GM13976 (cell line): ENCODE measurements at regions of chr4 and their contacts with region 1.

Region 1: DNA sequence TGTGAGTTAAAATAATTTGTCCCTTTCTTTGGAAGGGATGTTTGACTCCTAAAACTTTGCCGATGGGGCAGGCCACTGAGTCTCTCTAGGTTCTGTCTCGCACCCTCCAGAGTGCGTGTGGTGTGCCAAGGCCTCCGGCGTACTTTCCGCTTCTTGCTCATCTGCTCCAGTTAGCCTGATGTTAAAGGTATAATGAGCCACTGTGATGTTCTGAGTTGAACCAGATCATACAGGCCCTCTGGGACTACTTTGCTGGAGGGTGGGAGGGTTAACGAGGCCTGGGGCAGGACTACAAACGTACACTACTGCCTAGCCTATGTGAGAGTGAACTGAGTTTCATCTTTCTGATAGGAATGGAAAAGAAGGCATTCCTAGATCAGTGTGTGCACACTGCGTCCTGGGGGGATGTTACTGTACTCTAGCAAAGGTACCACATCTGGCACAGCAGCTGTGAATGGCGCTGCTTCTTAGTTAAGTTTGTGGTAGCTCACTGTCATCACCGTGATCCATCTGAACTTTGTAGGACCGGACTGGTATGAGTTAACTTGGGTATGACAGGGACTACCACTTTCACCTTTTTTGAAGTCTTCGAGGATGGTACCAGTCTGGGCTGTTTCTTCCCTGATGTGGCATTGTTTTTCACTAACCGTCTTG is 60.2 kb downstream of the RGS12 start:
- DNase-seq: no peak
- CTCF ChIP-seq: no peak

Region 2: GRCh38 chr4:3452376-3452775 is 99.3 kb after region 1 on chr4:
- in situ Hi-C with region 1: loop called (anchors 5 kb)
- DNase-seq: no peak
- CTCF ChIP-seq: no peak